ENCODE measurements at regions of chr11 and their contacts with region 1.

Region 1: DNA sequence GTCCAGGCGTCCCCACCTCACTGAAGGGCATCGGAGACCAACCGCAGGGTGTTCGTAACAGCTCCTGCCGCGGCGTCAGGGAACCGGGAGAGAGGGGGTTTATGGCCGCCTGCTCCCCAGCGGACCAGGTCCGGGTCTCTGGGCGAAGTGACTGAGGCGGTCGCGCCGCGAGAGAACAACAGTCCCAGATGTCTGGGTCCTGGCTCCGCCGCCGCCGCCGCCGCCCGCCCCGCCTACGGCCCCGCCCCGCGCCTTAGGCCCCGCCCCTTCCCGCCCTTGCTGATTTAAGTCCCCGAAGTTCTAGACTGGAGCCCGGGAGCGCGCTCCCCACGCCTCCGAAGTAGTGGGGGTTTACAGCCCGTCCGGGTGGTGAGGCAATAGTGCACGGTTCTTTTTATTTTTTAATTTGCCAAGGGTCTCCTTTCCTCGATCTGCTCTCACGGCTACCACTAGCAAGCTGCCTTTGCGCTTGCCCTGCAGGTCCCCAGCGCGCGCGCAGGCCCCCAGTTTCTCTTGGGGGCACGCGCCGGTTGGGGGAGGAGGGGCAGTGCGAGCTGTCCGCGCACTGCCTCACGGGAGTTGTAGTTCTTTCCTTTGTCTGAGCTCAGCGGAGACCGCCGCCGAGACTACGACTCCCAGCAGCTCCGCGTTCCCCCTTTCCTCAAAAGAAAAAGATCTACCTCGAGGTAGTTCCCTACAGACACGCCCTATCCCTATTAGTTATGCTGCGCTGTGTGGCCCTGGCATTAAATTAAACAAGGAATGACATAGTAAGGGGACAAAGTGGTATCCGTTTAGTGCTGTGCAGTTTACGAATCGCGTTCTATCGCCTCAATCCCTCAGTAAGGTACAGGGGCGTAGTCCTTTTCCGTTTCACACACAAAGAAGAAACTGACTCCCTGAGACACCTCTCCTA is at the start of gene PGM2L1:
- DNase-seq: peak; percentile 96 to 97
- ATAC-seq: peak; percentile 98
- H3K4me3 ChIP-seq: peak within 1 kb of the TSS; percentile 92 to 94
- H3K27ac ChIP-seq: peak within 1 kb of the TSS in 1 of 2 donors; percentile 92
- H3K4me1 ChIP-seq: peaks cover 1 to 3% of the 10 kb centered on the region in 2 donors
- H3K27me3 ChIP-seq: no peaks in the 10 kb centered on the region
- total RNA-seq, gene PGM2L1: 13.5 to 18.8 TPM

Region 2: DNA sequence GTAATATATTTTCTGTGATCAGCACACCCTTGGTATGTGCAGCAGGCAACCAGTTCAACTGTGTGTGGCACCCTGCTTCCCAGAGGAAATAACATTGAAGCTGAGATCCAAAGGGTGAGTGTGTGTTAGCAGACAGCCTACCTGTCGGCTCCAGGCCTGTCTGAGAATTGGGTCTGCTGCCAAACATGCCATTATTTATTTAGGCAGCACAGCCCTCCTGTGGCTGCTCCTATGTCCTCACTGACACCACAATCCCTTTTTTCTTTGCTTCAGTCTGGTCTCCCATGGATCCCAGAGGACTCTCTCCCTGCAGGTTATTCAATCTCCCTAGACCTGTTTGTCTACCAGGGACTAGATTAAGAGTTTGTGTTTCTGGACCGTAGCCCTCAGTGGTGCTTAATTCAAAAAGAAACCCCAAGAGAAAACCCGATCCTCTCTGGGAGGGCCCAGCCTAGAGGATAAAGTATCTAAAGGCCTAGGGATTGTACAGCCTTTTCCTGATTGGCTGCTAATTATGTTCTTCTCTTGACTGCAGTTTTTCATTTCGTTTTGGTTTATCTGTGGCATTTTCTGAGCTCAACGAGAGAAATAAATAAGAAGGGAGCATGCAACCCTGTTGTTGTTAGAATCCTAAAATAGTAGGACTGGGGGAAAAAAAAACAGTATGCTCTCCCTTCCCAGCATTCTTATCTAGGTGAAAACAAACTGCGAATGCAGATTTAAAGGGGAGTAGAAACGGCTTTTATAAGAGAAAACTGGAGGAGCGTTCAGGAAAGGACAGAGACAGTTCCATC is 44.8 kb after region 1 on chr11:
- intact Hi-C with region 1: loop called in 1 of 2 experiments (anchors 5 kb)
- DNase-seq: no peak
- ATAC-seq: no peak
- H3K4me3 ChIP-seq: no peak overlapping the region
- H3K27ac ChIP-seq: peak overlapping the region; percentile 36 to 82
- H3K4me1 ChIP-seq: peaks cover 0 to 12% of the 10 kb centered on the region in 2 donors
- H3K27me3 ChIP-seq: no peaks in the 10 kb centered on the region

Region 3: DNA sequence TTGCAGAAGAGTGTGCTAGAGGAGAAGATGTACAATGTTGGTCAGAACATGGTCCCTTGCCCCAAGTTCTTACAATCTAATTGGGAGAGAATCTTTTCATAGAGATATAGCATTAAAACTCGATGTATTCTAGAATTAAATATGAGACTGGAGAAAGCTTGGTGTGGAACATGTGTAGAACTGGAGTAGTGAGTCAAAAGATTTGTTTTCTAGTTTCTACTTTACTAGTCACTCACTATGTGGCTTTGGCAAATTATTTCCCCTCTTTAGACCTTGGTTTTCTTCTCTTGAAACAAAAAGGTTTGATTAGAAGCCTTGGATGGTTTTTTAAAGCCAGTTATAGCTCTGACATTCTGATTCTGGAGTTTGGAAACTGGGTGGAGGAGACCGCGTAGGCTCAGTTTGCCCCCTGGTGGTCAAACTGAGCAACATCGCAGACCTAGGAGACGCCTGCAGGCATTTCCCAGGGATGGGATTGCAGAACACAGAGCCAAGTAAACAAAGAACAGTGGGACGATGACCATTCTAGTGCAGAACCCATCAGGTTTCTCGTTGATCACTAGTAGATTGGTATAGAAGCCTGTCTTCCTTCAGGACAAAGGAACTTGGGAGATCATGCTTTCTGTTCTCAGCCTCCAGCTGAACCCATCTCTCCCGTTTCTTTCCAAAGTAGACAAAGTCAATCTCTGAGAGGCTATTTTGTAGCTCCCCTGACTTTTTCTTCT is 341.2 kb after region 1 on chr11:
- intact Hi-C with region 1: no loop called
- DNase-seq: peak in 1 of 2 donors; percentile 67
- ATAC-seq: peak; percentile 77
- H3K4me3 ChIP-seq: no peak overlapping the region
- H3K27ac ChIP-seq: no peak overlapping the region
- H3K4me1 ChIP-seq: no peaks in the 10 kb centered on the region
- H3K27me3 ChIP-seq: no peaks in the 10 kb centered on the region